ENCODE measurements at regions of chr5 and their contacts with region 1.

Region 1: GRCh38 chr5:127471211-127471610 is 46.2 kb upstream of the PRRC1 start:
- DNase-seq: no peak
- ATAC-seq: no peak
- H3K4me3 ChIP-seq: no peak overlapping the region
- H3K4me3 Mint-ChIP-seq: no peak overlapping the region
- H3K27ac ChIP-seq: no peak overlapping the region
- H3K27ac Mint-ChIP-seq: no peak overlapping the region
- H3K4me1 ChIP-seq: no peaks in the 10 kb centered on the region
- H3K4me1 Mint-ChIP-seq: no peaks in the 10 kb centered on the region
- H3K27me3 ChIP-seq: peaks cover 0 to 3% (median 1%) of the 10 kb centered on the region in 4 experiments
- H3K27me3 Mint-ChIP-seq: peaks cover 22% of the 10 kb centered on the region
- CTCF ChIP-seq: no peak

Region 2: DNA sequence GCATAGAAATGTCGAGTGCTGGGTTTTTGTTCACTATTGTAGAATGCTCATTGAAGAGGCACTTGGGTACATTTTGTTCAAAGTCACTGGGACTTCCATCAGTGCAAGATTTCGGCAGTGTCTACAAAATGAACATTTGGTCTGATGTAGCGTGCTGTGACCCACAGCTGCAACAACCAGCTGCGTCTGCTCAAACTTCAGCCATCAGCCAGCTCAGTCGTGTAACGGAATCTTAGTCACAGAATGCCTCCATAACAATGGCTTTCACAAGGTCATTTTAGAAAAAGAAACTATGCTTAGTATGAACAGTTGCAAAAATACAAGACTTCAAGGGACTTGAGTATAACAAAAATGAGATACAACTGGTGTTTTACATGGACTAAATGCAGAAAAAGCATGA is 1876.1 kb before region 1 on chr5:
- CTCF ChIA-PET with region 1: no interaction called
- POLR2A ChIA-PET with region 1: no interaction called
- intact Hi-C with region 1: no loop called
- DNase-seq: no peak
- ATAC-seq: no peak
- H3K4me3 ChIP-seq: no peak overlapping the region
- H3K4me3 Mint-ChIP-seq: no peak overlapping the region
- H3K27ac ChIP-seq: no peak overlapping the region
- H3K27ac Mint-ChIP-seq: no peak overlapping the region
- H3K4me1 ChIP-seq: no peaks in the 10 kb centered on the region
- H3K4me1 Mint-ChIP-seq: peaks cover 4% of the 10 kb centered on the region
- H3K27me3 ChIP-seq: no peaks in the 10 kb centered on the region
- H3K27me3 Mint-ChIP-seq: no peaks in the 10 kb centered on the region
- CTCF ChIP-seq: no peak

Region 3: GRCh38 chr5:126444137-126444536 is 1027.1 kb before region 1 on chr5:
- CTCF ChIA-PET with region 1: no interaction called
- POLR2A ChIA-PET with region 1: interaction called, 10 read pairs
- intact Hi-C with region 1: no loop called
- DNase-seq: no peak
- ATAC-seq: no peak
- H3K4me3 ChIP-seq: no peak overlapping the region
- H3K4me3 Mint-ChIP-seq: no peak overlapping the region
- H3K27ac ChIP-seq: no peak overlapping the region
- H3K27ac Mint-ChIP-seq: no peak overlapping the region
- H3K4me1 ChIP-seq: no peaks in the 10 kb centered on the region
- H3K4me1 Mint-ChIP-seq: no peaks in the 10 kb centered on the region
- H3K27me3 ChIP-seq: no peaks in the 10 kb centered on the region
- H3K27me3 Mint-ChIP-seq: no peaks in the 10 kb centered on the region
- CTCF ChIP-seq: no peak

Measured in B cell (primary cell).